ENCODE measurements at regions of chr10 and their contacts with region 1.

Region 1: GRCh38 chr10:110179220-110179619 is 28.2 kb upstream of the MXI1 start:
- DNase-seq: no peak
- H3K4me3 Mint-ChIP-seq: no peak overlapping the region
- H3K27ac Mint-ChIP-seq: no peak overlapping the region
- H3K4me1 Mint-ChIP-seq: peaks cover 2% of the 10 kb centered on the region
- H3K27me3 Mint-ChIP-seq: peaks cover 39% of the 10 kb centered on the region

Region 2: GRCh38 chr10:109966961-109967738 is 212.1 kb before region 1 on chr10:
- CTCF ChIA-PET with region 1: no interaction called
- POLR2A ChIA-PET with region 1: no interaction called
- DNase-seq: no peak
- H3K4me3 Mint-ChIP-seq: no peak overlapping the region
- H3K27ac Mint-ChIP-seq: no peak overlapping the region
- H3K4me1 Mint-ChIP-seq: no peaks in the 10 kb centered on the region
- H3K27me3 Mint-ChIP-seq: no peaks in the 10 kb centered on the region

Region 3: DNA sequence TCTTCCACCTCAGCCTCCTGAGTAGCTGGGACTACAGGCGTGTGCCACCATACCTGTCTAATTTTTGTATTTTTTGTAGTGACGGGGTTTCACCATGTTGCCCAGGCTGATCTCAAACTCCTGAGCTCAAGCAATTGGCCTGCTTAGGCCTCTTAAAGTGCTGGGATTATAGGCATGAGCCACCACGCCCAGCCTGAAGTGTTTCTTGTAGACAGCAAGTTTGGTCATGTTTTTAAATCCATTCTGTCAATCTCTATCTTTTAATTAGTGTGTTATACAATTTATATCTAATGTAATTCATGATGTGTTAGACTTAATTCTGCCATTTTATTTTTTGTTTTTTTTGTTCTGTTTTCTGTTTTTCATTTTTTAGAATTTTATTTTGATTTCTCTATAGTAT is 10.9 kb after region 1 on chr10:
- CTCF ChIA-PET with region 1: interaction called, 11 read pairs
- POLR2A ChIA-PET with region 1: no interaction called
- DNase-seq: no peak
- H3K4me3 Mint-ChIP-seq: no peak overlapping the region
- H3K27ac Mint-ChIP-seq: no peak overlapping the region
- H3K4me1 Mint-ChIP-seq: peaks cover 4% of the 10 kb centered on the region
- H3K27me3 Mint-ChIP-seq: peaks cover 60% of the 10 kb centered on the region